Activated T-helper 2 cell treated with anti-CD3 and anti-CD28 coated beads, Interferon-gamma antibody, Interleukin-2, Interleukin-4, amounts not matched to agents 10 μg/mL and 5 μg/mL and 100 μg/mL, durations not matched to agents 14 hours and 24 hours and 36 hours (primary cell): ENCODE measurements at regions of chr7 and their contacts with region 1.

Region 1: DNA sequence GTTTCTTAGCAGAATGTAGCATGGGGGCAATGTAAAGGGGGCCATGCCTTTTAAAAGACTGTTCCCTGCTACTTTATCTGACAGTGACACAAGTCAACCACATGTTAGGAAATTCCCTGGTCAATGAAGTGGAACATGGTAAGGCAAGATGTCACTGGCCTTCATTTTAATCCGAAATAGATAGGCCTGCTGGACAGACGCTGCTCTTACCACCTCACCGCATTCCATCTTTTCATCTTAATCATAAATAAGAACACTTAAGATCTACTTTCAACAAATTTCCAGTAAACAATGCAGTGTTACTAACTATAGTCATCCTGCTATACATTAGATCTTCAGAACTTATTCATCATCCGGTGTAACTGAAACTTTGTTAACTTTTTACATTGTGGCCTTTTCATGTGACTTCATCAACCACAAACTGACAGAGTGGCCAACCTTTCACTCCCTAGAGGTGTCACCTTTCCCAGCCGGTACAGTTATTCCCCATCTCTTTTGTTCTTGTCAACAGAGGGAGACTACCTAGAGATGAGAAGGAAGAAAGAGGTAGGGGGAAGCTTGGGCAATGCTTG is 15.6 kb downstream of the ASB4 start:
- DNase-seq: peak; percentile 33
- H3K4me3 Mint-ChIP-seq: peak overlapping the region; percentile 18
- H3K27ac Mint-ChIP-seq: peak overlapping the region; percentile 84
- H3K4me1 Mint-ChIP-seq: peaks cover 34% of the 10 kb centered on the region
- H3K27me3 Mint-ChIP-seq: peaks cover 3% of the 10 kb centered on the region

Region 2: DNA sequence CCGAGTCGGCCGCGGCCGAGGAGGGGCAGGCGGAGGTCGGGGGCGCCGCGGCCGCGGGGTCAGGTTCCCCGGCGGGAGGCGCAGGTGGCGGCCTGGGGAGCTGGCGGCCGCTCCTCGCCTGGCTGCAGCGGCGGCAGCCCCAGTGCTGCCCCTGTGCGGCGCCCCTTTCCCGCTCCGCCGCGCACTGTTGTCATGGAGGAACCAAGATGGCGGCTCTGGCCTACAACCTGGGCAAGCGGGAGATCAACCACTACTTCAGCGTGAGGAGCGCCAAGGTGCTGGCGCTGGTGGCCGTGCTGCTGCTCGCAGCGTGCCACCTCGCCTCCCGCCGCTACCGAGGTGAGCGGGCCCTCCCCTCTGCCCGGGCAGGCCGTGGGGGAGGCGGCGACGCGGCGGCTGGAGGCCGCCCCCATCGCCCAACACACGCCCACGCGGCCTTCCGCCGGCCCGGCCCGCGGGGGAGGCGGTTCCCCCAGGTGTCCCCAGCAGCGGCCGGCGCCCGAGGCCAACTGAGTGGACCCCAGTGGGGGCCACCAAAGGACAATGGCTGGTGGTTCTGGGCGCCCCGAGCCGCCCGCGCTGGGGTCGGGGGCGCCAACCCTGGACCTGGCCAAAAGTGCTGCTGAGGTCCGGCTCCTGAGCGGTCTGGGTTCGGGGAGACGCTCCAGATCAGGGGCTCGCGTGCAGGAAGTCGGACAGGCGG is 991.3 kb before region 1 on chr7:
- intact Hi-C with region 1: loop called (anchors 5 kb)
- DNase-seq: peak; percentile 60
- H3K4me3 Mint-ChIP-seq: peak overlapping the region; percentile 85
- H3K27ac Mint-ChIP-seq: peak overlapping the region; percentile 86
- H3K4me1 Mint-ChIP-seq: peaks cover 36% of the 10 kb centered on the region
- H3K27me3 Mint-ChIP-seq: no peaks in the 10 kb centered on the region

Region 3: DNA sequence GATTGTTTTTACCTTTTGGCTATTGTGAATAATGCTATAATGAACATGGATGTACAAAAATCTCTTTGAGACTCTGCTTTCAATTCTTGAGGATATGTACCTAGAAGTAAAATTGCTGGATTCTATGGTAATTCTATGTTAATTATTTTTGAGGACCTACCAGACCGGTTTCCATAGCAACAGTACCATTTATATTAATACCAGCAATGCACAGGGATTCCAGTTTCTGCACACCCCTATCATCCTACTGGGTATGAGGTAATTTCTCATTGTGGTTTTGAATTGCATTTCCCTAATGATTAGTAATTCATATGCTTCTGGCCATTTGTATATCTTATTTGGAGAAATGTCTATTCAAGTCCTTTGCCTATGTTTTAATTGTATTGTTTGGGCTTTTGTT is 603.8 kb before region 1 on chr7:
- intact Hi-C with region 1: no loop called
- DNase-seq: no peak
- H3K4me3 Mint-ChIP-seq: no peak overlapping the region
- H3K27ac Mint-ChIP-seq: no peak overlapping the region
- H3K4me1 Mint-ChIP-seq: no peaks in the 10 kb centered on the region
- H3K27me3 Mint-ChIP-seq: peaks cover 2% of the 10 kb centered on the region

Region 4: GRCh38 chr7:95434557-95435421 is 66.6 kb before region 1 on chr7 and contains the start of gene PON2:
- intact Hi-C with region 1: loop called (anchors 2 kb)
- DNase-seq: peak; percentile 35
- H3K4me3 Mint-ChIP-seq: peak within 1 kb of the TSS; percentile 82
- H3K27ac Mint-ChIP-seq: peak within 1 kb of the TSS; percentile 77
- H3K4me1 Mint-ChIP-seq: peaks cover 15% of the 10 kb centered on the region
- H3K27me3 Mint-ChIP-seq: peaks cover 6% of the 10 kb centered on the region
- total RNA-seq, gene PON2: 16.5 and 17.5 TPM in 2 replicates

Region 5: GRCh38 chr7:95511716-95512260 is 10.4 kb after region 1 on chr7:
- intact Hi-C with region 1: loop called (anchors 1 kb)
- DNase-seq: peak; percentile 32
- H3K4me3 Mint-ChIP-seq: no peak overlapping the region
- H3K27ac Mint-ChIP-seq: no peak overlapping the region
- H3K4me1 Mint-ChIP-seq: peaks cover 4% of the 10 kb centered on the region
- H3K27me3 Mint-ChIP-seq: peaks cover 26% of the 10 kb centered on the region

Region 6: GRCh38 chr7:96303686-96304443 is 802.5 kb after region 1 on chr7:
- intact Hi-C with region 1: loop called (anchors 5 kb)
- DNase-seq: no peak
- H3K4me3 Mint-ChIP-seq: peak overlapping the region; percentile 37
- H3K27ac Mint-ChIP-seq: peak overlapping the region; percentile 92
- H3K4me1 Mint-ChIP-seq: peaks cover 66% of the 10 kb centered on the region
- H3K27me3 Mint-ChIP-seq: no peaks in the 10 kb centered on the region